MCF 10A (cell line): ENCODE measurements at regions of chr12 and their contacts with region 1.

Region 1: GRCh38 chr12:9895215-9895971 is 14.1 kb downstream of the KLRF2 start:
- DNase-seq: no peak
- H3K4me3 Mint-ChIP-seq: no peak overlapping the region
- H3K27ac Mint-ChIP-seq: no peak overlapping the region
- H3K4me1 Mint-ChIP-seq: no peaks in the 10 kb centered on the region
- H3K27me3 Mint-ChIP-seq: no peaks in the 10 kb centered on the region
- CTCF ChIP-seq: no peak

Region 2: DNA sequence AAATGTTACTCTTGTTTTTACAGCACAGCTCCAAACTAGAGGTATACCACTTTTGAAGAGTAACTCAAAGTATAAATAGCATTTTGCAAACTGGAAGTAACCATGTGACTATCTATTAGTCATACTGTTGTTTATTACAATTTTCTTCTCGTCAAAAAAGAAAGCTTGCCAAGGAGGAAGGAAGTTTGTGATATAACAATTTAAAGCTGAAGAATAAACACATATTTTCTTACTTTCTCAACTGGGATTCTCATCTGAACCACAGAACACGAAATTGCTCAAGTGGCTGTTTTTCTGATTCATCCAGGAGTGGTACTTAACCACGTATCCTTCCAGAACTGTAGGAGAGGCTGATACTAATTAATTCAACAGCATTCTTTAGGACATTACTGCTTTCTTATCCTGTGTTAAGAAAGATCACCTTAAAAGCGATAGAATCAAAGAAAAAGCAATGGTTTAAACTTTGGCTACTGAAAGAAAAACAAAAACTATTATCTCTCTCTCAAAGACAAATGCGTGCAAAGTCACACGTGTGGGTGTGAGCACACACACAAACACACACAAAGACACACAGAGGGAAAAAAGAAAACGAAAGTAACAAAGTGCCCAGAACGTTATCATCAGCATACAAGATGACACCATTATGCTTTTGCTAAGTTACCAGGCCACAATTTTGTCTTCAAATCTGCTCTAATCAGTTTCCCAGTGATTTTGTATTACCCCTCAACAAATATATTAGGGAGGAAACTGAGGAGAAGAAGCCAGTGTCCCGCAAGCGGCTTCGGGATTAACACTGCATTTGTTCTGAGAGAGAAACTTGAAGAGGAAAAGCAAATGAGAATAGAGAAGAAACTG is 25.9 kb before region 1 on chr12 and contains the start of gene CLEC2B:
- CTCF ChIA-PET with region 1: interaction called, 3 read pairs
- POLR2A ChIA-PET with region 1: interaction called, 18 read pairs
- intact Hi-C with region 1: no loop called
- DNase-seq: peak; percentile 88
- H3K4me3 Mint-ChIP-seq: peak within 1 kb of the TSS; percentile 90
- H3K27ac Mint-ChIP-seq: peak within 1 kb of the TSS; percentile 100
- H3K4me1 Mint-ChIP-seq: peaks cover 51% of the 10 kb centered on the region
- H3K27me3 Mint-ChIP-seq: no peaks in the 10 kb centered on the region
- CTCF ChIP-seq: no peak
- total RNA-seq, gene CLEC2B: 1.8 and 2.2 TPM in 2 replicates

Region 3: GRCh38 chr12:9883175-9883574 is 12.2 kb before region 1 on chr12:
- CTCF ChIA-PET with region 1: no interaction called
- POLR2A ChIA-PET with region 1: interaction called, 10 read pairs
- intact Hi-C with region 1: no loop called
- DNase-seq: peak; percentile 83
- H3K4me3 Mint-ChIP-seq: no peak overlapping the region
- H3K27ac Mint-ChIP-seq: no peak overlapping the region
- H3K4me1 Mint-ChIP-seq: peaks cover 6% of the 10 kb centered on the region
- H3K27me3 Mint-ChIP-seq: no peaks in the 10 kb centered on the region
- CTCF ChIP-seq: no peak

Region 4: DNA sequence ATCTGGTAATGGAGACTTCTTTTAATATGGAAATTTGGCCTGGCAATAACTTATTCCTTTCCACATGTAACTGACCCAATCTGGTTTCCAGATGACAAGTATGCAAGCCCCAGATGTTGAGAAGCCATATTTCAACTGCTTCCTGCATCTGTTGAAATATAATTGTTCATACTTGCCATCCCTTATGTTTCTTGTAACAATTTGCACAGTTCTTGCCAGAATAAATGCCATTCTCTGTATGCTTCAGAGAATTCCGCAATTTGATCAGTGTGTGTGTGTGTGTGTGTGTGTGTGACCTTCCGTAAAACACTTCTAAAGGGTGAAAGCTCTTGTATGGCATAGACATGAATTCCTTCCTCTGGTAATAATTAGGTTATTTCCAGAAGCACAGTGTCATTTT is 38.6 kb after region 1 on chr12:
- CTCF ChIA-PET with region 1: no interaction called
- POLR2A ChIA-PET with region 1: no interaction called
- intact Hi-C with region 1: no loop called
- DNase-seq: no peak
- H3K4me3 Mint-ChIP-seq: no peak overlapping the region
- H3K27ac Mint-ChIP-seq: no peak overlapping the region
- H3K4me1 Mint-ChIP-seq: no peaks in the 10 kb centered on the region
- H3K27me3 Mint-ChIP-seq: no peaks in the 10 kb centered on the region
- CTCF ChIP-seq: no peak